ENCODE measurements at regions of chr10 and their contacts with region 1.

Region 1: GRCh38 chr10:14604181-14605142 is 170.2 kb downstream of the FAM107B start:
- DNase-seq: peak; percentile 84
- ATAC-seq: peak; percentile 68
- H3K4me3 ChIP-seq: peak overlapping the region; percentile 58 to 85 (median 70)
- H3K4me3 Mint-ChIP-seq: peak overlapping the region; percentile 86
- H3K27ac ChIP-seq: peak overlapping the region; percentile 54 to 61
- H3K27ac Mint-ChIP-seq: peak overlapping the region; percentile 78
- H3K4me1 ChIP-seq: peaks cover 53 to 62% of the 10 kb centered on the region in 2 donors
- H3K4me1 Mint-ChIP-seq: peaks cover 75% of the 10 kb centered on the region
- H3K27me3 ChIP-seq: no peaks in the 10 kb centered on the region
- H3K27me3 Mint-ChIP-seq: no peaks in the 10 kb centered on the region
- CTCF ChIP-seq: peak; percentile 16

Region 2: DNA sequence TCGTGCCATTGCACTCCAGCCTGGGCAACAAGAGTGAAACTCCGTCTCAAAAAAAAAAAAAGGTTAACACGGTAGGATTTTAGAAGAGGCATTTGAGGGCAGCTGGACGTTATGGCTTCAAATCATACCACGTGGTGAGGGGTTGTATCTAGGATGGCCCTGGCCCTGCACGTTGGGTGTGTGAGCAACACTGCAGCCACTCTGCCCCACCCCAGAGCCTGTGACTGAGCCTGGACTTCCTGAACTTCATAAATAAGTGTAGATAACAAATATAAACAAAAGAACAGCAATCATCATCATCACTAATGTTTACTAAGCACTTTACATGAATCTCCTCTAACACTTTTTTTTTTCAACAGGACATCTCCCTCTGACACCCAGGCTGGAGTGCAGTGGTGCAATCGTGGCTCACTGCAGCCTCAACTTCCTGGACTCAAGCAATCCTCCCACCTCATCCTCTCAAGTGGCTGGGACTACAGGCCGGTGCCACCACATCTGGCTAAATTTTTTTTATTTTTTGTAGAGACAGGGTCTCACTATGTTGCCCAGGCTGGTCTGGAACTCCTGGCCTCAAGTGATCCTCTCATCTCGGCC is 104.2 kb before region 1 on chr10:
- CTCF ChIA-PET with region 1: no interaction called
- POLR2A ChIA-PET with region 1: no interaction called
- intact Hi-C with region 1: loop called (anchors 2 kb)
- DNase-seq: no peak
- ATAC-seq: no peak
- H3K4me3 ChIP-seq: no peak overlapping the region
- H3K4me3 Mint-ChIP-seq: no peak overlapping the region
- H3K27ac ChIP-seq: no peak overlapping the region
- H3K27ac Mint-ChIP-seq: no peak overlapping the region
- H3K4me1 ChIP-seq: peaks cover 13 to 16% of the 10 kb centered on the region in 2 donors
- H3K4me1 Mint-ChIP-seq: peaks cover 27% of the 10 kb centered on the region
- H3K27me3 ChIP-seq: no peaks in the 10 kb centered on the region
- H3K27me3 Mint-ChIP-seq: no peaks in the 10 kb centered on the region
- CTCF ChIP-seq: no peak

Region 3: GRCh38 chr10:14588084-14588937 is 16.2 kb before region 1 on chr10:
- CTCF ChIA-PET with region 1: no interaction called
- POLR2A ChIA-PET with region 1: no interaction called
- intact Hi-C with region 1: loop called (anchors 1 kb)
- DNase-seq: no peak
- ATAC-seq: peak; percentile 37
- H3K4me3 ChIP-seq: no peak overlapping the region
- H3K4me3 Mint-ChIP-seq: peak overlapping the region; percentile 49
- H3K27ac ChIP-seq: peak overlapping the region; percentile 30 to 70
- H3K27ac Mint-ChIP-seq: peak overlapping the region; percentile 46
- H3K4me1 ChIP-seq: peaks cover 66 to 72% of the 10 kb centered on the region in 2 donors
- H3K4me1 Mint-ChIP-seq: peaks cover 89% of the 10 kb centered on the region
- H3K27me3 ChIP-seq: no peaks in the 10 kb centered on the region
- H3K27me3 Mint-ChIP-seq: no peaks in the 10 kb centered on the region
- CTCF ChIP-seq: no peak

Region 4: DNA sequence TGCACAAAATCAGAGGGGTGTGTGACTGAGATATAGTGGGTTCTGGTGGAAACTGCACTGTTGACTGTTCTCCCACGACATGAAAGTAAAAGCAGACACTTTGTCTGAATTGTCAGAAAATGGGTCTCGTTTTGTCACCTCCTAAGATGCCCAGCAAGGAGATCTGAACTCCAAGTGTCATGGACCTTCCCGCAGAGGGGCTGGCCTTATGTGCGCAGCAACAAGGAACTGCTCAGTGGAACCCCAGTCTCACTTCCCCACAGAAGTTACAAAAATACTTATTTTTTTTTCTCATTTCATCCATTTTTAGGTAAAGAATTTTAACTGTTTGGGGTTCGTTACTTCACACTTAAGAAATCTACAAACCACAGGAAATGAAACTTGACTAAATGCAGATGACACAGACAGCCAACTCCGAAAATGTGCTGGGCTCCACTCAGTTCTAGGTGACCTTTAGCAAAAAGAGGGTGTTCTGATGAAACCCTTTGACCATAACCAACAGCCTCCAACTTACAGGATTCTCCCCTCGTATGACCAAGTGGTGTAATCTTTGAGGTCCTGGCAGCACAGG is 55.2 kb after region 1 on chr10:
- CTCF ChIA-PET with region 1: no interaction called
- POLR2A ChIA-PET with region 1: interaction called, 4 read pairs
- intact Hi-C with region 1: loop called (anchors 1 kb)
- DNase-seq: peak; percentile 81
- ATAC-seq: peak; percentile 75
- H3K4me3 ChIP-seq: peak overlapping the region in 3 of 5 experiments; percentile 2 to 45 (median 3)
- H3K4me3 Mint-ChIP-seq: peak overlapping the region; percentile 66
- H3K27ac ChIP-seq: peak overlapping the region; percentile 72 to 88
- H3K27ac Mint-ChIP-seq: peak overlapping the region; percentile 94
- H3K4me1 ChIP-seq: peaks cover 63 to 71% of the 10 kb centered on the region in 2 donors
- H3K4me1 Mint-ChIP-seq: peaks cover 87% of the 10 kb centered on the region
- H3K27me3 ChIP-seq: no peaks in the 10 kb centered on the region
- H3K27me3 Mint-ChIP-seq: no peaks in the 10 kb centered on the region
- CTCF ChIP-seq: no peak

Region 5: DNA sequence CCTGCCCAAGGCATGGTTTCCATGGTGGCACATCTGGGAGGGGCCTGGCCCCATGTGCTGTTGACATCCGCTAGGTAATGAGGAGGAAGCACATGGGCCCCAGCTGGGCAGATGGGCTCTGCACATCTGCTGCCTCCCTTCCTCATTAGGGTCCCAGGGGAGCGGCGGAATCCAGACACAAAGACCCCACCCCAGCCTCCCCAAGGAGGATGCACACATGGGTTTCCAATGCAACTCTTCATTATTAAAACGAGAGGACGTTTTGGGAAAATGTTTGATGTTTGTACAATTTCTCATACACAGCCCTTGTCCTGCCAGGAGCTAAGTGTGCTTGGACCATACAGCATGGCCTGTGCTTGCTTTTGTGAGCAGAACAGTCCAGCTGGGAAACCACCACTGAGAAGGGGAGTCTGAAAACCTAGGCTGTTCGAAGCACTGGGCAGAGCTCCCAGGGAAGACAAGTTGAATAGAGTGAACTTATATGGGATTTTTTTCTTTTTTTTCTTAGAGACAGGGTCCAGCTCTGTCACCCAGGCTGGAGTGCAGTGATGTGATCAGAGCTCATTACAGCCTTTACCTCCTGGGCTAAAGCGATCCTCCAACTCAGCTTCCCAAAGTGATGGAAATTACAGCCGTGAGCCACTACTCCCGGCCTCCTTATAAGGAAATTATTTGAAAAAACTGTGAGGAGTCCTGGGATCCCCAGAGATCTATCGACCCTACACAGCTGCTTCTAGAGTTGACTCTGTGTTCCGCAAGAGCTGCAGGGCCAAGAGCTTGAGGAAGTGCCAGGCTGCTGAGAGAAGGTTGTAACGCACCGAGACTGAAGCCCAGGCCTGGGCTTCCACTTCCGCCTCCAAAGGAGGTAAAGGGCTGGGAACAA is 146.8 kb after region 1 on chr10:
- CTCF ChIA-PET with region 1: interaction called, 13 read pairs
- POLR2A ChIA-PET with region 1: no interaction called
- intact Hi-C with region 1: no loop called
- DNase-seq: peak; percentile 85
- ATAC-seq: peak; percentile 80
- H3K4me3 ChIP-seq: peak overlapping the region in 3 of 5 experiments; percentile 6 to 30 (median 13)
- H3K4me3 Mint-ChIP-seq: peak overlapping the region; percentile 81
- H3K27ac ChIP-seq: peak overlapping the region; percentile 84 to 96
- H3K27ac Mint-ChIP-seq: peak overlapping the region; percentile 98
- H3K4me1 ChIP-seq: peaks cover 48 to 58% of the 10 kb centered on the region in 2 donors
- H3K4me1 Mint-ChIP-seq: peaks cover 62% of the 10 kb centered on the region
- H3K27me3 ChIP-seq: no peaks in the 10 kb centered on the region
- H3K27me3 Mint-ChIP-seq: no peaks in the 10 kb centered on the region
- CTCF ChIP-seq: no peak

Region 6: DNA sequence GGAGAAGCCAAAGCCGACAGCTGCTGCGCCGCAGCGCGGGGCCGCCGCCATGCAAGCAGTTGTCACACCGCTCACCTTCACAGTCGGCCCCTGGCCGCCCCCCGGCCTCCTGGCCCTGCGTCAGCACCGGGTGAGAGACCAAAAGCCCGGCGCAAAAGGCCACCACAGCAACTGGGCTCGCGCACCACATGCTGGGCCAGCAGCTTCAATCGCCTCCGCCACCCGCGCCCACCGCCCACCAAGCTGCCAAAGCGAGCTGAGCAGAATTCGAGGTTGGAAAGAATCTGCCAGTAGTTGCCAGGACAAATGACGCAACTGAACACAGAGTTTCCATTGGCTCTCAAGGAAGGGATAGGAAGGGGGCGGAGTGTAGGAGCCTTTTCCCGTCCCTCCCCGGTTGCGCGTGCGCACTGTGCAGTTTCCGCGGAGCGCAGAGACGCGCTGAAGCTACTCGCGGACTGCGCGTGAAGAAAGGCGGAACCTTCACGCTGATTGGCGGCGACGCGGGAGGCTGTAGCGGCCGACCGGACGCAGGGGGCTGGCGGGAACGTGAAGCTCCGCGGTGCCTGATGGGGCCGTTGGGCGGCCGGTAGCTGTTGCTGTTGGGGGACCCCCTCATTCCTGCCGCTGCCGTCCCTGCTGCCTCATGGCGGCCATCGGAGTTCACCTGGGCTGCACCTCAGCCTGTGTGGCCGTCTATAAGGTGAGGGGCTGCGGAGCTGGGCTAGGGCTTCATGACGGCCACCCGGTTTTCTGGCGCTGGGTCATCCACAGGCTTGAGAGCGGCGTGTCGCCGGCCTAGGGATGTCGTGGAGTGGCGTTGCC is 233.5 kb after region 1 on chr10 and contains the starts of genes CDNF, HSPA14 and MSANTD7:
- CTCF ChIA-PET with region 1: interaction called, 3 read pairs
- POLR2A ChIA-PET with region 1: no interaction called
- intact Hi-C with region 1: loop called (anchors 1 kb)
- DNase-seq: peak; percentile 100
- ATAC-seq: peak; percentile 95
- H3K4me3 ChIP-seq: peak within 1 kb of the TSS; percentile 63 to 99 (median 98)
- H3K4me3 Mint-ChIP-seq: peak within 1 kb of the TSS; percentile 98
- H3K27ac ChIP-seq: peak within 1 kb of the TSS; percentile 83 to 85
- H3K27ac Mint-ChIP-seq: peak within 1 kb of the TSS; percentile 98
- H3K4me1 ChIP-seq: peaks cover 16 to 17% of the 10 kb centered on the region in 2 donors
- H3K4me1 Mint-ChIP-seq: peaks cover 20% of the 10 kb centered on the region
- H3K27me3 ChIP-seq: no peaks in the 10 kb centered on the region
- H3K27me3 Mint-ChIP-seq: no peaks in the 10 kb centered on the region
- CTCF ChIP-seq: no peak
- total RNA-seq, gene CDNF: 1.4 and 1.6 TPM in 2 replicates
- total RNA-seq, gene HSPA14: 12.5 and 12.8 TPM in 2 replicates
- total RNA-seq, gene MSANTD7: 12.9 and 15.2 TPM in 2 replicates

Region 7: GRCh38 chr10:14954001-14954770 is 349.7 kb after region 1 on chr10 and contains the start of gene DCLRE1C:
- CTCF ChIA-PET with region 1: no interaction called
- POLR2A ChIA-PET with region 1: no interaction called
- intact Hi-C with region 1: loop called (anchors 2 kb)
- DNase-seq: peak; percentile 91
- ATAC-seq: peak; percentile 77
- H3K4me3 ChIP-seq: peak within 1 kb of the TSS; percentile 74 to 89 (median 77)
- H3K4me3 Mint-ChIP-seq: peak within 1 kb of the TSS; percentile 96
- H3K27ac ChIP-seq: peak within 1 kb of the TSS; percentile 87 to 89
- H3K27ac Mint-ChIP-seq: peak within 1 kb of the TSS; percentile 97
- H3K4me1 ChIP-seq: peaks cover 42 to 62% of the 10 kb centered on the region in 2 donors
- H3K4me1 Mint-ChIP-seq: peaks cover 56% of the 10 kb centered on the region
- H3K27me3 ChIP-seq: no peaks in the 10 kb centered on the region
- H3K27me3 Mint-ChIP-seq: no peaks in the 10 kb centered on the region
- CTCF ChIP-seq: no peak
- total RNA-seq, gene DCLRE1C: 58.8 and 61.8 TPM in 2 replicates